A549 (cell line): ENCODE measurements at regions of chr18 and their contacts with region 1.

Region 1: DNA sequence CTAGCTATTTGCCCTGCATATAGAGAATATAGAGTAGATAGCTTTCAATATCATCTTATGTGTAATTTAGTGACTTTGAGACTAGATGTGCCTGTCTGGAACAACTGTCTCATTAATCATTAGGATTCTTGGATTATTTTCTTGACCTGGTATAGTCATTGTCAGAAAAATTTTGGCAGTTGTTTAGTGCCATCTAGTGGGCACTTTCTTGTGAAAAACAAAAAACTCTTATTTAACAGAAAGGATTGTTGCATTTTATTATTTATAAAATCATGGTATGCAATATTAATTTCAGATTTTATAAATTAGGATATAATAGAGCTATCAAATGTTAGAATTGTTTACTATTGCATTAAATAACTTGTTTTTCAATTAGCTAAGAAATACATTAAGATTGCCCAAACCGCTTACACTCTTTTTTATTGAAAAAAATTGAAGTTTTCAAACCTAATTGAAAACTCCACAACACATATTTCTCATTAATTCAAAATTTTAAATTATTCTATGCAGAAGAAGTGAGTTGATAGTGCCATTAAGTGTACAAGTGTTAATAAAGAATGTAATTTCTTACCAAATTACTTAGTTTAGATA is 80.3 kb downstream of the DYNAP start:
- DNase-seq: peak; percentile 10 to 21
- ATAC-seq: no peak
- H3K4me3 ChIP-seq: no peak overlapping the region
- H3K27ac ChIP-seq: no peak overlapping the region
- H3K4me1 ChIP-seq: peaks cover 10% of the 10 kb centered on the region
- CTCF ChIP-seq: peak; percentile 64
- EP300 ChIP-seq: no peak
- POLR2A ChIP-seq: no peak
- RAD21 ChIP-seq: peak; percentile 65 to 77

Region 2: GRCh38 chr18:54444319-54444914 is 227.0 kb before region 1 on chr18:
- CTCF ChIA-PET with region 1: interaction called, 19 read pairs
- POLR2A ChIA-PET with region 1: no interaction called
- DNase-seq: peak; percentile 6 to 57
- ATAC-seq: peak; percentile 56 to 82; a peak in 4 of 6 replicates
- H3K4me3 ChIP-seq: no peak overlapping the region
- H3K27ac ChIP-seq: no peak overlapping the region
- H3K4me1 ChIP-seq: no peaks in the 10 kb centered on the region
- CTCF ChIP-seq: peak; percentile 66
- EP300 ChIP-seq: no peak
- POLR2A ChIP-seq: no peak
- RAD21 ChIP-seq: peak; percentile 78 to 80

Region 3: GRCh38 chr18:54722486-54722885 is 51.1 kb after region 1 on chr18:
- CTCF ChIA-PET with region 1: no interaction called
- POLR2A ChIA-PET with region 1: no interaction called
- DNase-seq: no peak
- ATAC-seq: no peak
- H3K4me3 ChIP-seq: no peak overlapping the region
- H3K27ac ChIP-seq: no peak overlapping the region
- H3K4me1 ChIP-seq: no peaks in the 10 kb centered on the region
- CTCF ChIP-seq: no peak
- EP300 ChIP-seq: no peak
- POLR2A ChIP-seq: no peak
- RAD21 ChIP-seq: no peak